PC-9 (cell line): ENCODE measurements at regions of chr2 and their contacts with region 1.

Region 1: GRCh38 chr2:9897331-9897737 is 54.1 kb downstream of the TAF1B start:
- DNase-seq: peak; percentile 90 to 99
- H3K4me3 ChIP-seq: no peak overlapping the region
- H3K27ac ChIP-seq: peak overlapping the region; percentile 95
- H3K4me1 ChIP-seq: peaks cover 54% of the 10 kb centered on the region
- H3K27me3 ChIP-seq: no peaks in the 10 kb centered on the region
- CTCF ChIP-seq: no peak

Region 2: DNA sequence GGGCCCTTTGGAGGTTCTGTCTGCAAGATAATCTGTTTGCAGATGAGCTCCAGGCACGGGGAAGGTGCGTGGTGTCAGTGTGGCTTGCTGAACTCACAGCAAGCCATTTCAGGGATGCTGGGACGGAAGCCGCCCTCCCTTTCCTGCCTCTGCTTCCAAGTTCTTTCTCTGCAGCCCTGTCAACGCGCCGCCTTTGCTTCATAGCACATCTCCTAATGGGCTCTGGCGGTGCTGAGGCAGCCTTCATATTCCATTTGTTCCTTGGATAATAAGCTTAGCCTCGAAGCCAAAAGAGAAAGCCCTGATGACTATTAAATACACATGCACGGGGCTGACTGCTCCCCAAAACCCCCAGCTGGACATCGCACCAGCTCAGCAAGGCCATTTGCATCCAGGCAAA is 135.8 kb before region 1 on chr2:
- CTCF ChIA-PET with region 1: no interaction called
- POLR2A ChIA-PET with region 1: interaction called, 14 read pairs
- intact Hi-C with region 1: no loop called
- DNase-seq: no peak
- H3K4me3 ChIP-seq: no peak overlapping the region
- H3K27ac ChIP-seq: no peak overlapping the region
- H3K4me1 ChIP-seq: peaks cover 17% of the 10 kb centered on the region
- H3K27me3 ChIP-seq: no peaks in the 10 kb centered on the region
- CTCF ChIP-seq: no peak

Region 3: DNA sequence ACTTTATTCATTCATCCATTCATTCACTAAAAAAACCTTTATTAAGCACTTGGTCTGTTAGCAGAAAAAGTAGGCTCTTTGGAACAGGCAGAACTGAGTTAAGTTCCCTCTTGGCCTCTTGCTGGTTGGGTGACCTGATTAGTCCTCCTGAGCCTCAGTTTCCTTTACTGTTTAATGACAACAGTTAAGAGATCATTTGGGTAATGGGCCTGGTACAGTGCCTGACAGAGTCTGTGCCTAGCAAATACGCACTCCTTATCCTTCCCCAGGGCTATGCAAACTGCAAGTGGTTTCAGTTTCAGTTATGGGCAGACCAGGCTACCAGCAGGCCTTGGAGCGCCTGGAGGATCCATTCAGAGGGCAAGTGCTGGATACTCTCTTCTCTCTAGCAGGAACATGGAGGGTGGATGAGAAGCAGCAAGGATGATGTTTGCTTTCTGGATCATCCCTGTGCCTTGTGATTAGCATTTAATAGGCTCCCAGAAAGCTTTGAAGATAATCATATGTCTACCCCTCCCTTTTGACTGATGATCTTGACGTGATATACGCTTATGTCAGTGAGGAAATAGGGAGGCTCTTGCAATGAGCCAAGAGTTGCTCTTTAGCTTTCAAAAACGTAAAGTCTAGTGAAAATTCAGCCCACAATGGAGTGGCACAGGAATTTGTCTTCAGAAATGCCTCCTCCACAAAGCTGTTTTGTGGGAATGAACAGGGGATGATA is 66.5 kb before region 1 on chr2:
- CTCF ChIA-PET with region 1: interaction called, 3 read pairs
- POLR2A ChIA-PET with region 1: no interaction called
- intact Hi-C with region 1: loop called (anchors 5 kb)
- DNase-seq: peak; percentile 31 to 53
- H3K4me3 ChIP-seq: peak overlapping the region; percentile 41; the same call in 1 of the 2 replicates
- H3K27ac ChIP-seq: peak overlapping the region; percentile 84
- H3K4me1 ChIP-seq: peaks cover 49% of the 10 kb centered on the region
- H3K27me3 ChIP-seq: no peaks in the 10 kb centered on the region
- CTCF ChIP-seq: no peak

Region 4: GRCh38 chr2:9843229-9844035 is 53.9 kb before region 1 on chr2 and contains the start of gene TAF1B:
- CTCF ChIA-PET with region 1: interaction called, 9 read pairs
- POLR2A ChIA-PET with region 1: no interaction called
- intact Hi-C with region 1: loop called (anchors 2 kb)
- DNase-seq: peak; percentile 91 to 92
- H3K4me3 ChIP-seq: peak within 1 kb of the TSS; percentile 68
- H3K27ac ChIP-seq: peak within 1 kb of the TSS; percentile 86
- H3K4me1 ChIP-seq: peaks cover 50% of the 10 kb centered on the region
- H3K27me3 ChIP-seq: no peaks in the 10 kb centered on the region
- CTCF ChIP-seq: no peak; the same call in 1 of the 2 replicates
- total RNA-seq, gene TAF1B: 23.8 and 24.8 TPM in 2 replicates

Region 5: DNA sequence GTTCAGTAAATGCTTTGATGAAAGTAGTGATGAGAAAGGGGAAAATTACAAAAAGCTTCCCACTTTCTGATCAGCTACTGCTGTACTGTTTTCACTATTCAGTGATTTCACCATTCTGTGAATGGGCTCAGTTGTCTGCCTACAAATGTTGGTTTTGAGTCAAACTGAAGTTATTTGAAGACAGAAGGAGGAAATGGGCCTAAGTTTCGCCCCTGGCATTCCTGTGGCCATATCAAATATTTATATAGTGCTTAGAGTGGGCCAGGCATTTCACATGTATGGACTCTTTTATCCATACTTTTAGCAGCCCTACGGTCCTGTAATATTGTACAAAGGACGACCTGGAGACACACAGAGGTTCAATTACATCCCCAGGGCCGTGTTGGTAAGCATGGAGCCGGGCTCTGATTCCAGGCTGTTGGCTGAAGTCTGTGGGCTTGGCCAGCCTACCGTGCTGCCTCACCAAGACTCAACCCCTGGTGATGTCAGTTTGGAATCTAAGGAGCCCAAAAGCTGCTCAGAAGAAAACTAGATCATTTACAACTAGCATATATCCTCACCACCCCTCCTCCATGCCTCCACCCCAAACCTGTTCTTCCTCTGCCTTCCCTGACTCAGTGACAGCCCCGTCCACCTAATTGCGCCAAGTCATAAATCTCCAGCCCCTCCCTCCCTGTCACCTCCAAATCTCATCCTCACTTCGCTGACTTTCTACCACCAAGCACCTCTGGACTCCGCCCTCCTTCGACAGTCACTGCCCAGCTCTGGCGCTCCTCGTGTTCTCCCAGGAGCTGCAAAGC is 44.1 kb after region 1 on chr2:
- CTCF ChIA-PET with region 1: no interaction called
- POLR2A ChIA-PET with region 1: no interaction called
- intact Hi-C with region 1: loop called (anchors 5 kb)
- DNase-seq: peak; percentile 80 to 96
- H3K4me3 ChIP-seq: peak overlapping the region; percentile 40; the same call in 1 of the 2 replicates
- H3K27ac ChIP-seq: peak overlapping the region; percentile 97
- H3K4me1 ChIP-seq: peaks cover 74% of the 10 kb centered on the region
- H3K27me3 ChIP-seq: no peaks in the 10 kb centered on the region
- CTCF ChIP-seq: no peak

Region 6: DNA sequence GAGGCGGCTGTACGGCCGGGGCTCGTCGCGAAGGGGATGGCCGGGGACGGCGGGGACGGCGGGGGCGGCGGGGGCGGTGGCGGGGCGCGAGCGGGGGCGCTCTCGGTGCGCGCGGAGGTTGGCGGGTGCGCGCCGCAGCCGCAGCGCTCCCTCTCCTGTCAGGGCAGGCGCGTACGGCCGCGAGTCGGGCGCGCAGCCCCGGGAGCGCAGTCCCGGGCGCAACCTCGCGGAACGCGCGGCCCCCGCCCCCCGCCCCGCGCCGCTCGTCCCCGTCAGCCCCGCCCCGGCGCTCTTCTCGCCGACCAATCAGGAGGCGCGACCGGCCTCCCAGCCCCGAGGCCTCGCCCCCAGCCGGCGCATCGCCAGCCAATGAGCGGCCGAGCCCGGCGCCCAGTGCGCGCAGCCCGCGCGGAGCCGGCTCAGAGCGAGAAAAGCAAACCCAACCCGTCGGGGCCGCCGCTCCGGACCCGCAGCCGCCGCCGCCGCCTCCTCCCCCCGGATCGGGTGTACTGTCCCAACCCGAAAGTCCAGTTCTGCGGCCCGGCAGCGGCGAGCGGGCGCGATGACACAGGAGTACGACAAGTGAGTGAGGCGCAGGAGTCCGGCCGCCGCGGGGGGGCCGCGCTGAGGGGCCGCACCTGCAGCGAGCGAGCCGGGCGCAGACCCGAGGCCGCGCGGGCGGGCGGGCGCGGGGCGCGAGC is 54.1 kb after region 1 on chr2 and contains the start of gene GRHL1:
- CTCF ChIA-PET with region 1: no interaction called
- POLR2A ChIA-PET with region 1: no interaction called
- intact Hi-C with region 1: loop called (anchors 1 kb)
- DNase-seq: peak; percentile 85 to 96
- H3K4me3 ChIP-seq: peak within 1 kb of the TSS; percentile 61
- H3K27ac ChIP-seq: peak within 1 kb of the TSS; percentile 64
- H3K4me1 ChIP-seq: peaks cover 30% of the 10 kb centered on the region
- H3K27me3 ChIP-seq: no peaks in the 10 kb centered on the region
- CTCF ChIP-seq: no peak
- total RNA-seq, gene GRHL1: 8.6 and 10.6 TPM in 2 replicates